Psoas muscle (tissue), 8 donors: ENCODE measurements at regions of chr11 and their contacts with region 1.

Region 1: GRCh38 chr11:84558085-84558905 is 1068.8 kb downstream of the DLG2 start:
- DNase-seq: no peak
- ATAC-seq: peak in 3 of 4 donors; percentile 63 to 89 (median 75)
- H3K4me3 ChIP-seq: no peak overlapping the region
- H3K27ac ChIP-seq: no peak overlapping the region
- H3K4me1 ChIP-seq: no peaks in the 10 kb centered on the region
- H3K27me3 ChIP-seq: no peaks in the 10 kb centered on the region
- CTCF ChIP-seq: peak; percentile 87

Region 2: GRCh38 chr11:84061726-84062125 is 496.6 kb before region 1 on chr11:
- intact Hi-C with region 1: no loop called
- DNase-seq: no peak
- ATAC-seq: no peak
- H3K4me3 ChIP-seq: no peak overlapping the region
- H3K27ac ChIP-seq: no peak overlapping the region
- H3K4me1 ChIP-seq: no peaks in the 10 kb centered on the region
- H3K27me3 ChIP-seq: no peaks in the 10 kb centered on the region
- CTCF ChIP-seq: no peak

Region 3: DNA sequence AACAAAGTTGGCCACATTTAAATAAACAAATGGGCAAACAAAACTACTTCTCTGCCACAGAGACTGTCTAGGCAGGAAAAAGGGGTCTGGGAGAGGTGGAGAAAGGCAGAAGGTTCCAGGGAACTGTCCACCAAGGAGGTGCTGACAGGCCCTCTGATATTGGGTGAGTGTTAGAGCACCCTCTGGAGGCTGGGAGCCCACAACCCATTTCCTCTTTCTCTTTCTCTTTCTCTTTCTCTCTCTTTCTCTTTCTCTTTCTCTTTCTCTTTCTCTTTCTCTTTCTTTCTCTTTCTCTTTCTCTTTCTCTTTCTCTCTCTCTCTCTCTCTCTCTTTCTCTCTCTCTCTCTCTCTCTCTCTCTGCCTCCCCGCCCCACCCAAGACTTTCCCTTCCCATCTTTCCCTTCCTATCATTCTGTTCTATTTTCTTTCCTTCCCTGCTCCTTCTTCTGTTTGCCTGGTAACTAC is 156.1 kb after region 1 on chr11:
- intact Hi-C with region 1: loop called (anchors 1 to 5 kb)
- DNase-seq: peak; percentile 37 to 59
- ATAC-seq: peak in 3 of 4 donors; percentile 70 to 88 (median 80)
- H3K4me3 ChIP-seq: no peak overlapping the region
- H3K27ac ChIP-seq: no peak overlapping the region
- H3K4me1 ChIP-seq: no peaks in the 10 kb centered on the region
- H3K27me3 ChIP-seq: no peaks in the 10 kb centered on the region
- CTCF ChIP-seq: peak; percentile 61